Activated T-helper 1 cell treated with anti-CD3 and anti-CD28 coated beads, Interleukin-12 subunit alpha, Interleukin-12 subunit beta, Interleukin-2, Interleukin-4 antibody, amounts not matched to agents 30 ng/mL and 10 ng/mL and 1 ng/mL, durations not matched to agents 14 hours and 24 hours and 36 hours (primary cell): ENCODE measurements at regions of chr1 and their contacts with region 1.

Region 1: DNA sequence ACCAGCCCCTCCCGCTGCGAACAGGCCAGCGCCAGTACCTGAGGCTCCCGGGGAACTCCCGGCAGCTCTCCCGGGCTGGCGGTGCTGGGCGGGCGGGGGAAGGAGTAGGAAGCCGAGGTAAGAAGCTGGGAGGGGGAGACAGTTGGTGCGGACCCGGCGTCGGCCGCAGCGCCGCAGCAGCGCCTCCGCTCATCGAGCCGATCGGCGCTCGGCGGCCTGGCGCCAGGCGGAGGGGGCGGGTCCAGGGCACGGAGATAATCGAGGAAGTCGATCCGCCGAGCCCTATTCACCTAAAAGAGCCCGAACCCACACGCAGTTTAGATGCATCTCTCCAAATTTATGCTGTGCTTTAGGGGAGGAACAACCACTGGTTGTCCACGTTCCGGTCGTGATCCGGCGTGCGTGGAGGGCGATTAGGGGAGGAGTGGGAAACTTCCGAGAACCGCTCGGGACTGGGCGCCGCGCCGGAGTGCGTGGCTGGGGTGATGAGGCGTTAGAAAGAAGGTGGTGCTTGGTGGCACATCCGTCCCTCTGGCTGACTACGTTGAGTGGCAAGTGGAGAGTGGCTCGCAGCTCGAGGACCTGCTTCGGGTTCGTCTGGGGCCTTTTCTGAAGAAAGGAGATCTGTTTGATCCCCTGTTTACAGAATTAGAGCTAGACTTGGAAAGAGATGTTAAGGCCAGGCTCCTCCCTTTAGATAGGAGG is at the start of gene VAMP4:
- DNase-seq: peak; percentile 80
- H3K4me3 Mint-ChIP-seq: peak within 1 kb of the TSS; percentile 99
- H3K27ac Mint-ChIP-seq: peak within 1 kb of the TSS; percentile 100
- H3K4me1 Mint-ChIP-seq: peaks cover 56% of the 10 kb centered on the region
- H3K27me3 Mint-ChIP-seq: no peaks in the 10 kb centered on the region
- total RNA-seq, gene VAMP4: 8.8 and 10.4 TPM in 2 replicates

Region 2: GRCh38 chr1:169893494-169894362 is 1848.3 kb before region 1 on chr1 and contains the start of gene SCYL3:
- intact Hi-C with region 1: loop called (anchors 5 kb)
- DNase-seq: peak; percentile 86
- H3K4me3 Mint-ChIP-seq: peak within 1 kb of the TSS; percentile 86
- H3K27ac Mint-ChIP-seq: peak within 1 kb of the TSS; percentile 100
- H3K4me1 Mint-ChIP-seq: peaks cover 51% of the 10 kb centered on the region
- H3K27me3 Mint-ChIP-seq: peaks cover 12% of the 10 kb centered on the region
- total RNA-seq, gene SCYL3: 11.8 and 12.3 TPM in 2 replicates

Region 3: GRCh38 chr1:171583581-171584201 is 158.3 kb before region 1 on chr1:
- intact Hi-C with region 1: loop called (anchors 5 kb)
- DNase-seq: no peak
- H3K4me3 Mint-ChIP-seq: no peak overlapping the region
- H3K27ac Mint-ChIP-seq: peak overlapping the region; percentile 3
- H3K4me1 Mint-ChIP-seq: peaks cover 38% of the 10 kb centered on the region
- H3K27me3 Mint-ChIP-seq: no peaks in the 10 kb centered on the region

Region 4: DNA sequence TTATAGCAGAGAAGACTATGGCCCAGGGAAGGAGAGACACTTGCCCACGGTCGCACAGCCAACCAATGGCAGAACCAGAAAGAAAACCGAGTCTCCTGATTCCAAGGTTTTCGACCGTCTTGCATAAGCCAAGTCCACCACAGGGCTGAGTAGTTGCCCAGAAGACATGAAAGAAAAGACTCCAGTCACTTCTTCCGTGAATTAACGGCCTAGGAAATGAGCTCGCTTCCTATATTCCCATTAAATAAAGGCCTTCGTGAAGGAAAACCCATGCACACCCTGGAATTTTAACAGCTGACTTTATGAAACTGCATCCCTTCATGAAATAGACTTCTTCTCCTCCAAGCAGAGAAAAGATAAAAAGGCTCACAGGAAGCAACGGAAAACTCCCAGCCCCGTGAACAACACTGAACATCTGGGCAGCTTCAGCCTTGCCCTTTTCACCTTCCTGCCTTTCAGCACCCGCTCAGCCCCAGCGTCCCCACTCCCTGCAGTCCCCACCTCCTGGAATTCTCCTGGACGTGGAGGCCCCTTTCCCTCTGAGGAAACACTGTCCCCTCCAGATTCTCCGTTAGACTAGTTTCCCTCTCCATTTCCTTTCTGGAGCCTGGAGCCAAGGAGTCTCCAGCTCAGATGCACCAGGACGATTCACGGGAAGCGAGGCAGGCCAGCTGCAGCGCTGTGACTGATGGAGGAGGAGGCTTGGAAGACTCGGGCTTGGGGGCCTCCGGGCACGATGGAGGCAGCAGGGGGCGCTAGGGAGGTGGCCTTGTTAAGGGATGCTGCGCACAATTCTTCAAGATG is 86.9 kb before region 1 on chr1:
- intact Hi-C with region 1: loop called (anchors 1 kb)
- DNase-seq: peak; percentile 54
- H3K4me3 Mint-ChIP-seq: peak overlapping the region; percentile 60
- H3K27ac Mint-ChIP-seq: no peak overlapping the region
- H3K4me1 Mint-ChIP-seq: peaks cover 13% of the 10 kb centered on the region
- H3K27me3 Mint-ChIP-seq: peaks cover 25% of the 10 kb centered on the region

Region 5: GRCh38 chr1:171817511-171818265 is 75.7 kb after region 1 on chr1:
- intact Hi-C with region 1: loop called (anchors 2 kb)
- DNase-seq: peak; percentile 31
- H3K4me3 Mint-ChIP-seq: peak overlapping the region; percentile 61
- H3K27ac Mint-ChIP-seq: peak overlapping the region; percentile 90
- H3K4me1 Mint-ChIP-seq: peaks cover 31% of the 10 kb centered on the region
- H3K27me3 Mint-ChIP-seq: no peaks in the 10 kb centered on the region

Region 6: DNA sequence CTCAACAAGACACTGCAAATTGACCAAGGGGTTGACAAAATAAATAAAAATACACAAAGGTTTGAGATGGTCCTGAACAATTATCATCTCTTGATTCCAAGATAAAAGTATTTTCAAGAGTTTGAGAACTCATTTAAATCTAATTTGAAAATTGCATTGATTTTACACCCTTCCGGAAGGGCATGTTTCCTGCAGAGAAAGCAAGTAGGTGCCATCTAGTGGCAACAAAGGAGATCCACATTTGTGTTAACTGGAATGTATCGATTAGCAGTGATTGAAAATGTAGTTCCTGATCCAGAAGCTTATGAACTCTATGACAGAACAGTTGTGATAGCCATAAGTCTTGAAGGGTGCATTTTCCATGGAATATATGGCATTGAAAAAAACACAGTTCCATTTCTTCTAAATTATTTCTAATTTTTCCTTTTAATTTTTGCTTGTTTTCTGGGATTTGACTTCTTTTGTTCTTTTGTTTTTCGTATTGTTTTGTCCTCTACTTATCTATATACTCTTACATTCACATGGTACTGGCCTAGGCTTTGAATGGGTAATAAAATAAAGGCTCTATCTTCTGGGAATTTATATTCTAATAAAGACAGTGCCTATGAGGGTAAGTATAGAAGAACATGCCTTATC is 242.9 kb after region 1 on chr1:
- intact Hi-C with region 1: loop called (anchors 5 kb)
- DNase-seq: no peak
- H3K4me3 Mint-ChIP-seq: no peak overlapping the region
- H3K27ac Mint-ChIP-seq: no peak overlapping the region
- H3K4me1 Mint-ChIP-seq: no peaks in the 10 kb centered on the region
- H3K27me3 Mint-ChIP-seq: peaks cover 7% of the 10 kb centered on the region

Region 7: DNA sequence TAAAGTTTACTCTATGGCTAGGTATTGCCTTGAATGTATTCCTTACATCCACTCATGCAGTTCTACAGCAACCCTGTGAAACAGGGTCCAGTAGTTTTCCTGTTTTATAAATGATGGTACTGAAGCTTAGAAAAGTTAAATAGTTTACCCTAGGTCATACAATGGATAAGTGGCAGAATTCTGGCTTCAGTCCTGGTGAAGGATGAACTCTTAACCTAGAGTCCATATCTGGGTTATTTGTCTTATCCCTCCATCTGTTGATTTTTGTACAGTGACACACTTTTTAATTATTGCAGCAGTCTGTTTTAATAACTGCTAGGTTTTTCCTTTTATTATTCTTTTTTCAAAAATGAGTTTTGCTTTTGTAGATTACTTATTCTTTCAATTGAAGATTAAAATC is 363.2 kb after region 1 on chr1:
- intact Hi-C with region 1: no loop called
- DNase-seq: no peak
- H3K4me3 Mint-ChIP-seq: no peak overlapping the region
- H3K27ac Mint-ChIP-seq: no peak overlapping the region
- H3K4me1 Mint-ChIP-seq: no peaks in the 10 kb centered on the region
- H3K27me3 Mint-ChIP-seq: peaks cover 18% of the 10 kb centered on the region